Left cardiac atrium (tissue), 4 donors: ENCODE measurements at regions of chr5 and their contacts with region 1.

Region 1: DNA sequence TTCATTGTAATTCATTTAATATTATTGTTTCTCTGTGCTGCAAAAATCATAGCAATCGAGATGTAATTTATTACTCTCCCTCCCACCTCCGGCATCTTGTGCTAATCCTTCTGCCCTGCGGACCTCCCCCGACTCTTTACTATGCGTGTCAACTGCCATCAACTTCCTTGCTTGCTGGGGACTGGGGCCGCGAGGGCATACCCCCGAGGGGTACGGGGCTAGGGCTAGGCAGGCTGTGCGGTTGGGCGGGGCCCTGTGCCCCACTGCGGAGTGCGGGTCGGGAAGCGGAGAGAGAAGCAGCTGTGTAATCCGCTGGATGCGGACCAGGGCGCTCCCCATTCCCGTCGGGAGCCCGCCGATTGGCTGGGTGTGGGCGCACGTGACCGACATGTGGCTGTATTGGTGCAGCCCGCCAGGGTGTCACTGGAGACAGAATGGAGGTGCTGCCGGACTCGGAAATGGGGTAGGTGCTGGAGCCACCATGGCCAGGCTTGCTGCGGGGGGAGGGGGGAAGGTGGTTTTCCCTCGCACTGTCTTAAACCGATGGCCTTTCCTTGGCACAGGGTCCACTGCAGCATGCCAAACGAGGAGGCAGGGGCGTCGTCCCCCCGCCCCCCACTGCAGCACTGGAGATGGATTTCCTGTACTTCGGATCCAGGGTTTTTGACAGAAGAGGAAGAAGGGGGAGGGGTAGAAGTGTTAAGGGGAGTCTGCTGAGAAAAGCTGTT is at the start of gene APC:
- DNase-seq: peak; percentile 97
- ATAC-seq: peak; percentile 100
- total RNA-seq, gene APC: 36.8 to 37.1 TPM

Region 2: DNA sequence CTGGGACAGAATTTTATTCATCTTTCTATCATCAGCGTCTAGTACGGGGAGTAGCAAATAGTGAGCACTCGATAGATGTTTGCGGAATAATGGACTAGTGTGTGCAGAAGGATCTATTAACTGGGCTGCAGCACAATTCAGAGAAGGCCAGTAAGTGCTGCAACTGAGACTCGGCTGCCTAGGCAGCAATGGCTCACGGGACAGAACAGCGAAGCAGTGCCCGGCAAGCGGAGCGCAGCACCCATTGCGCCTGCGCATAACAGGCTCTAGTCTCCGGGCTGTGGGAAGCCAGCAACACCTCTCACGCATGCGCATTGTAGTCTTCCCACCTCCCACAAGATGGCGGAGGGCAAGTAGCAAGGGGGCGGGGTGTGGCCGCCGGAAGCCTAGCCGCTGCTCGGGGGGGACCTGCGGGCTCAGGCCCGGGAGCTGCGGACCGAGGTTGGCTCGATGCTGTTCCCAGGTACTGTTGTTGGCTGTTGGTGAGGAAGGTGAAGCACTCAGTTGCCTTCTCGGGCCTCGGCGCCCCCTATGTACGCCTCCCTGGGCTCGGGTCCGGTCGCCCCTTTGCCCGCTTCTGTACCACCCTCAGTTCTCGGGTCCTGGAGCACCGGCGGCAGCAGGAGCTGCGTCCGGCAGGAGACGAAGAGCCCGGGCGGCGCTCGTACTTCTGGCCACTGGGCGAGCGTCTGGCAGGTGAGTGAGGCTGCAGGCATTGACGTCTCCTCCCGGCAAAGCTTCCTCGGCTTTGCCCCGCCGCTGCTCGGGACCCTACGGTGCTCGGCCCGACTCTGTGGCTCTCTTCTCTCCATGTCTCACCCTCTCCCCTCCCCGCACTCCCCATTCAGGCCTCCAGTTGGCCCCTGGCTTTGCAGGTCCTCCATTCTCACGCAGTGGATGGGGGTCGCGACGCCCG is 30.2 kb before region 1 on chr5:
- intact Hi-C with region 1: loop called in 1 of 2 experiments (anchors 2 kb)
- DNase-seq: peak; percentile 98
- ATAC-seq: peak; percentile 96 to 97